Activated CD4-positive, alpha-beta memory T cell treated with anti-CD3 and anti-CD28 coated beads, Interleukin-2, amount 10 ng/mL, durations not matched to agents 7 days and 5 days (primary cell): ENCODE measurements at regions of chr7 and their contacts with region 1.

Region 1: GRCh38 chr7:92421676-92422435 is 25.4 kb upstream of the GATAD1 start:
- DNase-seq: no peak
- H3K4me3 Mint-ChIP-seq: no peak overlapping the region
- H3K27ac Mint-ChIP-seq: no peak overlapping the region
- H3K4me1 Mint-ChIP-seq: peaks cover 28% of the 10 kb centered on the region
- H3K27me3 Mint-ChIP-seq: peaks cover 10% of the 10 kb centered on the region

Region 2: DNA sequence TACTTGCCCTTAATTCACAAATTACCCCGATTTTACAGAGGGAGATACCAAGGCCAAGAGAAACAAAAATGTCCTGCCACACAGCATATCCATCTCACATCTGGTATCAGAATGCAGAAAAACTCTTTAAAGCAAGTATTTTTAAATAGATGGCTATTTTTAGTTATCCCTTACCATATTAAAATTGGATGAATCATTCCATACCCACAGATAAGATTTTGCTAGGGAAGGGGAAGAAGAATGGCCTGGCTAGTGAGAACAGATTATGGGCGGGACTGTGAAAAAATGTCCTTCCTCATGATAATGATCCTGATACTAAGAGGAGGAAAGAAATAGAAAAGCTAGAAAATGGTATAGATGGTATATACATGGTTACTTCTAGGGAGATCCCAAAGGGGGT is 55.1 kb before region 1 on chr7:
- CTCF ChIA-PET with region 1: no interaction called
- POLR2A ChIA-PET with region 1: no interaction called
- DNase-seq: no peak
- H3K4me3 Mint-ChIP-seq: no peak overlapping the region
- H3K27ac Mint-ChIP-seq: no peak overlapping the region
- H3K4me1 Mint-ChIP-seq: no peaks in the 10 kb centered on the region
- H3K27me3 Mint-ChIP-seq: no peaks in the 10 kb centered on the region

Region 3: GRCh38 chr7:92461027-92462003 is 39.5 kb after region 1 on chr7:
- CTCF ChIA-PET with region 1: interaction called, 18 read pairs
- POLR2A ChIA-PET with region 1: no interaction called
- DNase-seq: peak; percentile 32
- H3K4me3 Mint-ChIP-seq: no peak overlapping the region
- H3K27ac Mint-ChIP-seq: no peak overlapping the region
- H3K4me1 Mint-ChIP-seq: peaks cover 2% of the 10 kb centered on the region
- H3K27me3 Mint-ChIP-seq: no peaks in the 10 kb centered on the region